Activated CD4-positive, alpha-beta memory T cell treated with anti-CD3 and anti-CD28 coated beads, Interleukin-2, amount 10 ng/mL, durations not matched to agents 7 days and 5 days (primary cell): ENCODE measurements at regions of chr10 and their contacts with region 1.

Region 1: DNA sequence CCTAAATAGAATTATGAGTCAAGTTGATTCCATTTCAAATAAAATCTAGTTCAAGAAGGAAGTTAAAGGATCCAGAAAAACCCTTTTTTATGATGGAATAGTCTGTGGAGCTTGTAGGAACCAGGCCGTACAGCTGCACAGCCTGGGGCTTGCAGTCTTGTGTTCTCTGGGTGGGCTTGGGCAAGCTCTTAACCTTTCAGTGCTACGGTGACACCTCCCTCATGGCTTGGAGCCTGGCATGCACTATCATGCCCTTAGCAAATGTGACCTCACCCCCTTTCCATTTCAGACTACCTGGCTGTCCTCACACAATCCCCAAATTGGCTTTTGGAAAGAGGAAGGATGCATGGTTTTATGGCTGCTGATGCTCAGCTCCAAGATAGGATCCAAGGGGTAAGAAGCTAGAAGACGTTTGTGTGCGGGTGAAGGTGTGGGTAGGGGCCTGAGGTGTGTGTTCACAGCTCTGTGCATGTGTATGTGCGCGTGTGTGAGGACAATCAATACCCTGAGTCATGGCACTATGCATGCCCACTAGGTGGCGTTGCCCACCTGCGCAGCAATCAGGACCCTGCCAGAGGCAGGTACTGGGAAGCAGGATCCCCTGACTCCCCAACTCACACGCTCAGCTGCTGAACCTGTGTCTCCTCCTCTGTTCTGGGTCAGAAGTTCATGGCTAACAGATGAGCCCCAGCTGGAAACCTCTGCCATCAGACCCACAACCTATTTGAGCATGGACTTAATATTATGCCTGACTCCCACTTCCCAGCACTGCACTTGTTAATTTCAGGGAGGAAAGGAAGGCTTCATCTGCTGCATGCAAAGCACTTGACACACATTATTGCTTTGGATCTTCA is 113.4 kb downstream of the PTPN20 start:
- DNase-seq: peak; percentile 68
- H3K4me3 Mint-ChIP-seq: no peak overlapping the region
- H3K27ac Mint-ChIP-seq: no peak overlapping the region
- H3K4me1 Mint-ChIP-seq: no peaks in the 10 kb centered on the region
- H3K27me3 Mint-ChIP-seq: no peaks in the 10 kb centered on the region

Region 2: GRCh38 chr10:47047671-47048525 is 23.3 kb after region 1 on chr10:
- CTCF ChIA-PET with region 1: interaction called, 16 read pairs
- POLR2A ChIA-PET with region 1: no interaction called
- DNase-seq: peak; percentile 76
- H3K4me3 Mint-ChIP-seq: no peak overlapping the region
- H3K27ac Mint-ChIP-seq: no peak overlapping the region
- H3K4me1 Mint-ChIP-seq: peaks cover 7% of the 10 kb centered on the region
- H3K27me3 Mint-ChIP-seq: no peaks in the 10 kb centered on the region

Region 3: DNA sequence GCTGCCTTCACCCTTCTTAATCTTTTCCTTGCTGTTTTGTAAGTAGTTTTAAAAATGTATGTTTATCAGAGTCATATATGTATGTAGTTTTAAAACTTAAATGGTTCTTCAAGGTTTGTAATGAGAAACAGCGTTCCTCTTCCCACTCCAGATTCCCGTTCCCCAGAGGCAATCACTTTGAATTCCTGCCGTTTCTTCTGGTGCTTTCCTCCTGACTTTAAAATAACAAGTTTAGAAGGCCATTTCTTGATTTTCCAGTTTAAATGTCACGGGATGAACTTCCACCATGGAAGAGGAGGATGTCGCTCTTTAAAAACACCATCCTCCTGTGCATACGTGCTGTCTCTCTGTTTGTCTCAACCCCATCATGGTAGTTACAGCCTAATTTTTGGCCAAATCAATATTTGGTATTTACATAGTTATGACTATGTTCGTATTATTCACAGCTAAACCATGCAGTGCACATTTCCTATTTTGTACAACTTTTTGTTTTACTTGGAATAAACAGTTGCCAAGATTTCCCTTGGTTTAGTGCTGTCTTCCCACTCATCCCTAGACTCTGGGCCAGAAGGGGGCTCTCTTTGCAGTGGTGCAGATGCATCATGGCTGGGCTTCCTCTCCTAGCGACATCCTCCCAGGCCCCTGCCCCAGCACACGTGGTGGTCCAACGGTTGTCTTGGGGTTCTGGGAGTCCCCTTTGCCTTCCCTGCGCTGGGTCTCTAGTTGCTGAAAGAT is 38.0 kb after region 1 on chr10:
- CTCF ChIA-PET with region 1: no interaction called
- POLR2A ChIA-PET with region 1: no interaction called
- DNase-seq: no peak
- H3K4me3 Mint-ChIP-seq: no peak overlapping the region
- H3K27ac Mint-ChIP-seq: no peak overlapping the region
- H3K4me1 Mint-ChIP-seq: no peaks in the 10 kb centered on the region
- H3K27me3 Mint-ChIP-seq: no peaks in the 10 kb centered on the region